CD4-positive, alpha-beta T cell (primary cell): ENCODE measurements at regions of chr19 and their contacts with region 1.

Region 1: DNA sequence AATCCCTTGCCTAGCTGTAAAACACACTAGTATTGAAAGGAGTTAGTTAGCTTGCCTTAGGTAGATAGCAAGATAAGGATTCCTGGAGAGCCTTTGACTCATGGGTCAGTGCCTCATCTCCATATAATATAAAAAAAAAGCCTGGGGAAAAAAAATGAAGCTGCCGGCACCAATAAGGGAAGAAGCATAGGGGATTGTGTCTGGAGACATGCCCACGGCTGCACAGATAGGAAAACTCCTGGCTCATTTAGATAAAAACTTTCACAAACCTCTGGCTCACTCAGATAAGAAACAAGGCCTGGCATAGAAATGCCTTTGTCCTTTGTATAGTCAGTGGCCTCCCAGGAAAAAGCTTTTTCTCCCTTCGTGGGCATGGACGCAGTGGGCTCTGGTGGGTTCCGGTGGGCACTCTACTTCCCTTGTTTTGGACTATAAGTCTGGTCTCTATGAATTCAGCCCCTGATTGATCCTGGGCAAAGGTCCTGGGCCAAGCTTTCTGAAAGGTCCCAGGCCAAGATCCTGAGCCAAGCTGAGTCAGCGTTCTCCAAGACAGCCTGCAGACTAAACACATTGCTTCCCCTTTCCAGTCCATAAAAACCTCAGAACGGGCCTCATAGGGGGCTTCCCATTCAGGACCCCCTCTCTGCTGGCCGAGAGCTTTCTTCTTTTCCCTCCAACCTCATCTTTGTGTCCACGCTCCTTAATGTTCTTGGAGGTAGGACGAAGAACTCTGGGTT is 4.9 kb upstream of the OR7A17 start:
- DNase-seq: no peak
- ATAC-seq: no peak
- H3K4me3 ChIP-seq: no peak overlapping the region
- H3K4me3 Mint-ChIP-seq: no peak overlapping the region
- H3K27ac ChIP-seq: no peak overlapping the region
- H3K27ac Mint-ChIP-seq: no peak overlapping the region
- H3K4me1 ChIP-seq: peaks cover 3% of the 10 kb centered on the region
- H3K4me1 Mint-ChIP-seq: no peaks in the 10 kb centered on the region
- H3K27me3 ChIP-seq: peaks cover 0 to 37% of the 10 kb centered on the region in 2 experiments
- H3K27me3 Mint-ChIP-seq: peaks cover 35% of the 10 kb centered on the region
- CTCF ChIP-seq: no peak

Region 2: GRCh38 chr19:13920940-13921761 is 969.7 kb before region 1 on chr19:
- CTCF ChIA-PET with region 1: no interaction called
- POLR2A ChIA-PET with region 1: no interaction called
- intact Hi-C with region 1: loop called in 1 of 2 experiments (anchors 5 kb)
- DNase-seq: peak in 4 of 14 experiments; percentile 15 to 62 (median 48)
- ATAC-seq: peak; percentile 83
- H3K4me3 ChIP-seq: no peak overlapping the region
- H3K4me3 Mint-ChIP-seq: no peak overlapping the region
- H3K27ac ChIP-seq: no peak overlapping the region
- H3K27ac Mint-ChIP-seq: peak overlapping the region; percentile 28
- H3K4me1 ChIP-seq: peaks cover 2% of the 10 kb centered on the region
- H3K4me1 Mint-ChIP-seq: no peaks in the 10 kb centered on the region
- H3K27me3 ChIP-seq: no peaks in the 10 kb centered on the region
- H3K27me3 Mint-ChIP-seq: no peaks in the 10 kb centered on the region
- CTCF ChIP-seq: no peak

Region 3: GRCh38 chr19:14786421-14786851 is 104.4 kb before region 1 on chr19:
- CTCF ChIA-PET with region 1: no interaction called
- POLR2A ChIA-PET with region 1: no interaction called
- intact Hi-C with region 1: loop called in 1 of 2 experiments (anchors 5 kb)
- DNase-seq: peak in 5 of 14 experiments; percentile 7 to 59 (median 19)
- ATAC-seq: no peak
- H3K4me3 ChIP-seq: no peak overlapping the region
- H3K4me3 Mint-ChIP-seq: no peak overlapping the region
- H3K27ac ChIP-seq: no peak overlapping the region
- H3K27ac Mint-ChIP-seq: no peak overlapping the region
- H3K4me1 ChIP-seq: peaks cover 26% of the 10 kb centered on the region
- H3K4me1 Mint-ChIP-seq: peaks cover 15% of the 10 kb centered on the region
- H3K27me3 ChIP-seq: peaks cover 4% of the 10 kb centered on the region in 2 experiments
- H3K27me3 Mint-ChIP-seq: peaks cover 28% of the 10 kb centered on the region
- CTCF ChIP-seq: peak; percentile 59

Region 4: DNA sequence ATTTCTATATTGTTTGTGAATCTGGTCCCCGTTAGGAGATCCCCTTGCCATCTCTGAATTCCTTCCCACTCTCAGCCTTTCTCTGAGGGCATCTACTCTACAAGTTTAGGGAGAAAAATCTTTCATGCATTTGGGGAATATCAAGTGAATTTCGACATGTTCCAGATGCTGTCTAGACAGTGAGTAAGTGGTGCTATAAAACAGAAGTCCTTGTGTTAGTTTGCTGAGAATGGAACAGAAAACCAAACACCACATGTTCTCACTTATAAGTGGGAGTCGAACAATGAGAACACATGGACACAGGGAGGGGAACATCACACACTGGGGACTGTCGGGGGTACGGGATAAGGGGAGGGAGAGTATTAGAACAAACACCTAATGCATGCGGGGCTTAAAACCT is 47.2 kb before region 1 on chr19:
- CTCF ChIA-PET with region 1: no interaction called
- POLR2A ChIA-PET with region 1: no interaction called
- intact Hi-C with region 1: no loop called
- DNase-seq: no peak
- ATAC-seq: no peak
- H3K4me3 ChIP-seq: no peak overlapping the region
- H3K4me3 Mint-ChIP-seq: no peak overlapping the region
- H3K27ac ChIP-seq: no peak overlapping the region
- H3K27ac Mint-ChIP-seq: no peak overlapping the region
- H3K4me1 ChIP-seq: no peaks in the 10 kb centered on the region
- H3K4me1 Mint-ChIP-seq: no peaks in the 10 kb centered on the region
- H3K27me3 ChIP-seq: peaks cover 0 to 12% of the 10 kb centered on the region in 2 experiments
- H3K27me3 Mint-ChIP-seq: peaks cover 45% of the 10 kb centered on the region
- CTCF ChIP-seq: no peak

Region 5: DNA sequence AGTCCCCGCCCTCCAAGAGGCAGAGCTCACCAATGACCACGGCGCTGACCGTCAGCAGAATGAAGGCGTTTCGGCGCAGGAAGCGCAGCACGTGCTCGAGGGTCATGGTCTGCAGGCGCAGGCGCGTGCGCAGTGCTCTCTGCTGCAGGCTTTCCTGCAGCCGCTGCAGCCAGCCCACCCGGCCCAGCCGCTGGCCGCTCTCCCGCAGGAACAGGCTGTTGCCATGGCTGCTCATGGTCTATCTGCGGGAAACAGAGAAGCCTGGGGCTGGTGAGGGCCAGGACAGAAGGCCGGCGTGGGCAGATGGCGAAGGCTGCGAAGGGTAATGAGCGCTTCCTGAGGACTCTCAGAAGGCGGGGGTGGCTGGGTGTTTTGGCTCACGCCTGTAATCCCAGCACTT is 81.9 kb after region 1 on chr19:
- CTCF ChIA-PET with region 1: no interaction called
- POLR2A ChIA-PET with region 1: no interaction called
- intact Hi-C with region 1: no loop called
- DNase-seq: no peak
- ATAC-seq: no peak
- H3K4me3 ChIP-seq: no peak overlapping the region
- H3K4me3 Mint-ChIP-seq: no peak overlapping the region
- H3K27ac ChIP-seq: no peak overlapping the region
- H3K27ac Mint-ChIP-seq: no peak overlapping the region
- H3K4me1 ChIP-seq: no peaks in the 10 kb centered on the region
- H3K4me1 Mint-ChIP-seq: no peaks in the 10 kb centered on the region
- H3K27me3 ChIP-seq: peaks cover 11 to 16% of the 10 kb centered on the region in 2 experiments
- H3K27me3 Mint-ChIP-seq: peaks cover 57% of the 10 kb centered on the region
- CTCF ChIP-seq: no peak

Region 6: GRCh38 chr19:14992780-14993179 is 102.0 kb after region 1 on chr19:
- CTCF ChIA-PET with region 1: no interaction called
- POLR2A ChIA-PET with region 1: no interaction called
- intact Hi-C with region 1: no loop called
- DNase-seq: no peak
- ATAC-seq: no peak
- H3K4me3 ChIP-seq: no peak overlapping the region
- H3K4me3 Mint-ChIP-seq: no peak overlapping the region
- H3K27ac ChIP-seq: no peak overlapping the region
- H3K27ac Mint-ChIP-seq: no peak overlapping the region
- H3K4me1 ChIP-seq: no peaks in the 10 kb centered on the region
- H3K4me1 Mint-ChIP-seq: no peaks in the 10 kb centered on the region
- H3K27me3 ChIP-seq: peaks cover 9 to 12% of the 10 kb centered on the region in 2 experiments
- H3K27me3 Mint-ChIP-seq: peaks cover 32% of the 10 kb centered on the region
- CTCF ChIP-seq: no peak

Region 7: DNA sequence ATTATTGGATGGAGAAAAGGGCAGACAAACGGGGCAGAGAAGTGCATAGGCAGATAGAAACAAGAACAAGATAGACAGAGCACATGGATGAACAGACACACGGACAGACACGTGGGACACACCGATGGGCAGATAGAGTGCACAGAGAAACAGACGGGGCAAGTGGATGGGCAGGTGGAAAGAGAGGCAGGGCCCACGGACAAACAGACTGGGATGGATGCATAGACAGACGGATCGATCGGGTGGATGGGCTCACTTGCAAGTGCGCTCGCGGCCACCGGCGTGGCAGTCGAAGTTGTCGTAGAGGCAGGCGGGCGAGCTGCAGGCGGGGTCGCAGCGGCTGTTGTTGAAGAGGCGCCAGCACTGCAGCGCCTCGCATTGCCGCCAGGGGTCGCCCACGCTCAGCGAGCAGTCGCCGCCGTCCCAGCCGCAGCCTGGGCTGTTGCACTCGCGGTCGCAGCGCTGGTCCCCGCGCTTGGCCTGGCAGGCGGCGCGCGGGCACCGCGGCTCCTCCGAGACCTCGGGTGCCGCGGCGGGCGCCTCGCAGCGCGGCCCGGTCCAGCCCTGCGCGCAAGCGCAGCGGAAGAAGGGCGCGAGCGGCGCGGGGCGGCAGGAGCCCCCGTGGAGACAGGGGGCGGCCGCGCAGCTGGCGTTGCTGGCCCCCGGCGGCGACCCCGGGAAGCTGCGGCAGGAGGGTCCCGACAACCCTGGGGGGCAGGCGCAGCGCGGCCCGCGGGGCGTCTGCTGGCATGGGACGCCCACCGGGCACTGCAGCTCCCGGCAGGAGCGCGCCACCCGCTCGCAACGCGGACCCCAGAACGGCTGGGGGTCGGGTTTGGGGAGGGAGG is 286.7 kb after region 1 on chr19:
- CTCF ChIA-PET with region 1: no interaction called
- POLR2A ChIA-PET with region 1: no interaction called
- intact Hi-C with region 1: no loop called
- DNase-seq: peak; percentile 66 to 92 (median 80)
- ATAC-seq: peak; percentile 100
- H3K4me3 ChIP-seq: no peak overlapping the region
- H3K4me3 Mint-ChIP-seq: no peak overlapping the region
- H3K27ac ChIP-seq: no peak overlapping the region
- H3K27ac Mint-ChIP-seq: no peak overlapping the region
- H3K4me1 ChIP-seq: peaks cover 7% of the 10 kb centered on the region
- H3K4me1 Mint-ChIP-seq: peaks cover 5% of the 10 kb centered on the region
- H3K27me3 ChIP-seq: peaks cover 0 to 6% of the 10 kb centered on the region in 2 experiments
- H3K27me3 Mint-ChIP-seq: peaks cover 21% of the 10 kb centered on the region
- CTCF ChIP-seq: peak; percentile 79